Gastrocnemius medialis (tissue), 4 donors: ENCODE measurements at regions of chr9 and their contacts with region 1.

Region 1: DNA sequence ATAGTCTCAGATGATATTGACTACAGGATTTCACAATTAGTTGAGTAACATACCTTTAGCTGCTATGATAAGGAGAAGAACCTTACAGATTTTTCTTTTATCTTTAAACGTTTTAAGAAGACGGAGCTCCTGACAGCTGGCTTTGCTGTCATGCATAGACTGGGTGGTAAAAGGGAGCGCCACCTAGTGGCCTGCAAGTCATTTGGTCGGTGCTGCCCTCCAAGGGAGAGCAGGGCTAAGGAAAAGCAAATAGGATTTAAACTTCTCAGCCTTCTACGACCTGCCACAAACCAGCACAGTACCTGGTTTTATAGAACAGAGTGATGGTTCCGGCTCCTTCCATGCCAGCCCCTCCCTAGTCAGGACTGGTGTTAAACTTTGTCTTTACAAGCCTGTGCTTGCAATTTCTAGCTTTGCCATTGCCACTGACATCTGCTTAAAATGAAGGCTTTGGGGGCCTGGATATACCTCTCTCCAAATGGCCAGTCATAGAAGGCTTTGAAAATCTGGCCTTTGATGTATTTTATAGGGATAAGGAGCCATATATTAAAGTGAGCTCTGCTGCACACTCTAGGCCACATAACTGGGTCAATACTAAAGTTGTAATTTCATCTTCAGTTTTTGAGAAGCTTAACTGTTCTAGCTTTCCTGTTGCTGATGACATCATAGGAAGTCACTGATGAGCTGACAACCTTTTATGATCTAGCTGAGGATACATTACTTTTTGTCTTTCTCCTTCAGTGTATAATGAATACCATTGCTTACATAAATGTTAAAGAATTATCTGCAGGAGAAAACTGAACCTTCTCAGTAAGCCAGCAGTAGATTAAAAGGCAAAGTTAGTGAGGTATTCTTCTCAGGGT is 31.1 kb upstream of the ADAMTSL1 start:
- DNase-seq: peak; percentile 26 to 29
- ATAC-seq: peak in 1 of 2 donors; percentile 70
- H3K4me3 ChIP-seq: no peak overlapping the region
- H3K27ac ChIP-seq: no peak overlapping the region
- H3K4me1 ChIP-seq: peaks cover 12 to 13% of the 10 kb centered on the region in 2 donors
- H3K27me3 ChIP-seq: no peaks in the 10 kb centered on the region
- CTCF ChIP-seq: peak; percentile 43 to 83 (median 57)
- POLR2A ChIP-seq: no peak

Region 2: DNA sequence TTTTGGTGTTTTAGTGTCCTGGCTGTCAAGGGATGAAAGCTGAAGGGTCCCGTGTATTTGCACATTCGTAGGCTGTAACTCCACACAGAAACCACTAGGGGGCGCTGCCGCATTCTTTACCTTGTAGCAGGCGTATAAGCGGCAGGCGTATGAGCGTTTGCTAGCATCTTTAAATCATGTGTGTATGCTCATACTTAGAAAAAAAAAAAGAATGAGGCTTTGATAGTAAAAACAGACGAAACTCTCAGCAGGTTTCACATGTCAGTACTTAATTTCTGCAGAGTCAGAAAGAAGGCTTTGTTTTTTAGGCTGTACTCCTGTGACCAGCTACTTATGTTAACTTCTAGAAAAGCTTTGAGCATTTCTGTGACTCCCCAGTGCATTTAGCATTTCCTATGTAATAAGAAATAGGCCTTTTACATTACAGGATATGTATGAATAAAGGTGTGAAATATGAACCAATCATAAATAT is 187.7 kb before region 1 on chr9:
- in situ Hi-C with region 1: loop called in 3 of 4 experiments (anchors 10 to 25 kb)
- intact Hi-C with region 1: loop called (anchors 1 kb)
- DNase-seq: peak; percentile 28 to 32
- ATAC-seq: peak; percentile 56 to 58
- H3K4me3 ChIP-seq: no peak overlapping the region
- H3K27ac ChIP-seq: no peak overlapping the region
- H3K4me1 ChIP-seq: no peaks in the 10 kb centered on the region
- H3K27me3 ChIP-seq: no peaks in the 10 kb centered on the region
- CTCF ChIP-seq: peak; percentile 69 to 91 (median 81)
- POLR2A ChIP-seq: no peak

Region 3: DNA sequence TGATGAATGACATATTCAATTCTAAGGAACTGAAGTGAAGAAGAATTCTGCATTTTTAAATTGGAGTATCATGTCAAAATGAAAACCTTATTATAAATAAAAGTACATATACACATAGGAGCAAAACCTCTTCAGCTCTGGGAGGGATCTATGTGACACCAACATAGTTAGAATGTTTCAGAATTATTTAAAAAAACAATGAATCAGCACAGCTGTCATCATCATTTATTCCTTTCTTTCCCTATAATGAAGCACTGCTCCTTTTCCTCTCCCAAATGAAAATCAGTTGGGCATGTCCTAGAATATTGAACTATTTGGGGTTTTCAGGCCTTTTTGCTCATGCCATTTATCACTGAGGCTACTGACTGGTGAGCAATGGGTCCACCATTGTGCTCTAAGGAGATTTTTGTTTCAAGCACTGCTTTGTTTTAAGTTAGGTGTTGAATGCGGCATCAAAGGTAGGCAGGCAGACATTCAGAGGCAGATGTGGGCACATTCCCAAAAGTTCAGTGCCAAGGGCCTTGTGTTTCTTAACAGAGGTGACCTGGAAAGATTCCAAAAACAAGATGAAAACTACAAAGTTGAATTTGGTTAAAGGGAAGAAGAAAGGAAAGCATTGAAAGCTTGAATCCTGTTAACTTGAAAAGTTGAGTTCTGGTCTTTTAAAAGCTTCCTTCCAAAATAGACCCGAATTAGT is 95.3 kb before region 1 on chr9:
- in situ Hi-C with region 1: no loop called
- intact Hi-C with region 1: no loop called
- DNase-seq: no peak
- ATAC-seq: no peak
- H3K4me3 ChIP-seq: no peak overlapping the region
- H3K27ac ChIP-seq: no peak overlapping the region
- H3K4me1 ChIP-seq: no peaks in the 10 kb centered on the region
- H3K27me3 ChIP-seq: no peaks in the 10 kb centered on the region
- CTCF ChIP-seq: no peak
- POLR2A ChIP-seq: no peak

Region 4: DNA sequence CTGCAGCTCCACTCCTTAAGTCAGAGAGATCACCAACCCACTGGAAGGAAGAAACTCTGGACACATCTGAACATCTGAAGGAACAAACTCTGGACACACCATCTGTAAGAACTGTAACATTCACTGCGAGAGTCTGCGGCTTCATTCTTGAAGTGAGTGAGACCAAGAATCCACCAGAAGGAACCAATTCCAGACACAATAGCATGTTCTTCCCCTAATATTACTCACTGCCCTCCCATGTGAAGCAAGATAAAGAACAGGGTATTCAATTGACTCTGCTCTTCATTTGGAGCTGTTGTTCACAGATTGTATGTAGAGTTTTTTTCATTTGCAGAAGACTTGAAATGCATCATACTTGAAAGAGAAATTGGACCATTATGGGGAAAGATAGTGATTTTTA is 579.3 kb after region 1 on chr9:
- in situ Hi-C with region 1: loop called in 2 of 4 experiments (anchors 25 kb)
- intact Hi-C with region 1: no loop called
- DNase-seq: no peak
- ATAC-seq: no peak
- H3K4me3 ChIP-seq: no peak overlapping the region
- H3K27ac ChIP-seq: no peak overlapping the region
- H3K4me1 ChIP-seq: no peaks in the 10 kb centered on the region
- H3K27me3 ChIP-seq: no peaks in the 10 kb centered on the region
- CTCF ChIP-seq: no peak
- POLR2A ChIP-seq: no peak